Adrenal gland (tissue), 19 donors: ENCODE measurements at regions of chr20 and their contacts with region 1.

Region 1: DNA sequence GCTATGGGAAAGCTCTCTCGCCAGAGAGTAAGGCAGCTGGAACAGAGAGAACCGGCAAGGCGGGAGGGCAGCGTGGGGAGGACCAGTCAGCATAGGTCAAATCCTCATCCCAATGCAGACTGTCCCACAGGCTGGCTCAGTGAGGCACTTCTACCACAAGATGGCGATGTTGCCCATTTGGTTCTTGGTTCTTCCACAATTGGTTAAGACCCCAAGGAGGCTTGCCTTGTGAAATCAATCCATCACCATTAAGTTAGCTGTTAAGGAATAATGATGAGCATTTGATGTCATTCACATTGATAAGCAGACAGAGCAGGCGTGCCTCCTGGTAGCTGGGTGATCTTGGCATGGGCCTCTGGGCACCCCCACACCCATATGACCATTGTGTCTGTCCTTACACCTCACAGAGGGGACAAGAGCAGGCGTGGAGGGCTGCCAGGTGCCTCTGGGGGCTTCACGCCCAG is 2.4 kb downstream of the CSTL1 start:
- DNase-seq: peak; percentile 51 to 87 (median 70)
- H3K4me3 ChIP-seq: no peak overlapping the region
- H3K27ac ChIP-seq: no peak overlapping the region
- H3K4me1 ChIP-seq: no peaks in the 10 kb centered on the region
- H3K27me3 ChIP-seq: no peaks in the 10 kb centered on the region
- CTCF ChIP-seq: peak; percentile 73 to 95 (median 81)
- POLR2A ChIP-seq: no peak

Region 2: DNA sequence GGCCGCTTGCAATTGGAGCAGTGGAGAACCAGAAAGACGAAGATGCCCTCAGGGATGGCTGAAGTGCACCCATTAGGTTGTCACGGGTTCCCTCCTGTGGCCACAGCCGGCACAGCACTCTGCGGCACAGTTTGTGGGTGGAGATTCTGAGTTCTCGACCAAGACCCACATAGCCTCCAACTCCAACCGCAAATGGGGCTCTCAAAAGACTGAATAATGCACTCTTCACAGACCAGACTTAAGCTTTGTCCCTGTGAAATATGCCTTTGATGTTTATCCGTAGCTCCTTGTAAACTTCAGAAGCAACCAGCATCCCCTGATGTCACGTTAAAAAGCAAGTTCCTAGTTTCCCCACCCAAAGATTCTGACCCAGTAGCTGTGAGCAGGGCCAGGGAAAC is 164.8 kb after region 1 on chr20:
- intact Hi-C with region 1: loop called (anchors 2 to 5 kb)
- DNase-seq: peak; percentile 74 to 91 (median 84)
- H3K4me3 ChIP-seq: no peak overlapping the region
- H3K27ac ChIP-seq: no peak overlapping the region
- H3K4me1 ChIP-seq: no peaks in the 10 kb centered on the region
- H3K27me3 ChIP-seq: no peaks in the 10 kb centered on the region
- CTCF ChIP-seq: peak; percentile 78 to 92 (median 89)
- POLR2A ChIP-seq: no peak

Region 3: DNA sequence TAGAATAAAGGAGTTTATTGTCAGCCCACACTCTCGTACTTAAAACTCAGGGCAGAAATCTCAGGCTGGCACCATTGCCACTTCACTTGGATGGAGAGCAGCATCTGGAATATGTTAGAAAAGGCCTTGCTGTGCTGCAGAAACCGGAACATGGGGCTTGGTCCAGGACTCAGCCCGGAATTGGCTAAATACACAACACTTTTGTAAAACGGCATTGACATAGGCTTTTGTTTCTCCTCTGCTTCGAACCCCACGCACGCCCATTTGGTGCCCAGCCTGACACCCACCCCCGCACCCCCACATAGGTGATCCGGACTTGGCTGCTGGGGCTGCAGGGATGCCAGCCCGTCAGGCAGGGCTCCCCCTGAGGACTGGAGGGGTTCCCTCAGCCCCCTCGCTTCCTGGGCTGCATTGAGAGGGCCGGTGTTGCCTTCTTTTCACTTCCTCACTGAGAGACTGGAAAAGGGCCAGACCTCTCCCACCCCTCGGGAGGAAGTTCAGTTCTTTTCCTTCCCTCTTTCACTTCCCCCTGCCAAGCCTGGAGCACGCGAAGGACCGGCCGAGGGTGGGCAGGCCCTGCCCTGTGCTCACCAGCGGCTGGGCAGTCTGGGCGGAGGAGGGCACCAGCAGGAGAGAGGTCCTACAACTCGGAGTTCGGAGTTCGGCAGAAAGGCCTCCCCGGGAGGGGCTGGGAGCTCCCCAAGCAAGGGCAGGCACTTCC is 213.8 kb after region 1 on chr20:
- intact Hi-C with region 1: no loop called
- DNase-seq: peak in 6 of 7 donors; percentile 42 to 74 (median 54)
- H3K4me3 ChIP-seq: no peak overlapping the region
- H3K27ac ChIP-seq: peak overlapping the region in 2 of 5 donors; percentile 34 to 80
- H3K4me1 ChIP-seq: no peaks in the 10 kb centered on the region
- H3K27me3 ChIP-seq: no peaks in the 10 kb centered on the region
- CTCF ChIP-seq: no peak
- POLR2A ChIP-seq: no peak